Common myeloid progenitor, CD34-positive (primary cell): ENCODE measurements at regions of chr22 and their contacts with region 1.

Region 1: DNA sequence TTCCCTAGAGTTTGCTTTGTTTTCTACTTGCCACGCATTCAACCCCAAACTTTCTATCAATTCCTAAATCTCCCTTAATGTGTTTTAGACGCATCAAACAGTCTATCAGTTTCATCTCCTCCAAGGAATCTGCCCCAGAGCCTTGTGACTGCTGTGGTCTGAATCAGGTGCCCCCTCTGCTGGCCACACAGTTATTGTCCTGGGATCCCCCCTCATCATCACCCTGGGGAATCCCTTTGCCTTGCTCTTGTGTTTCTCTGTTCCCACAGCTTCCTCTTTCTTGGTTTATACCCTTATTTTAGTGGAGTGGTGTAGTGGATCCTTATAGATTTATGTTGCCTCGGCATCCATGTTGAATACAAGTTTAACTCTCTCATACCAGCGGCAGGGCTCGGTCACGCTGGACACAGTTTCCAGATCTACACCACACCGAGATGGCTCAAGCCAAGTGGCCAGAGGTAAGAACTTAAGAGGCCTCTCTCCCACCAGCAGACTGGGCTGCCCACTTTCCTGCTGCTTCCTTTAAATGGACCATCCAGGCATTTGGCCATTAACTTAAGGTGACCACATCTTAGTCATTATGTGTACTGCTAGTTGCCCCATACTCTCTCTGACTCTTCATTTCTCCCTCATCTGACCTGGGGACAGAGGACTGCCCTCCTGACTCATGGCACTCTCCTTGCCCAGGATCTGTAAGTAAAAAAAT is 8.2 kb downstream of the UPB1 start:
- DNase-seq: peak; percentile 88 to 95 (median 94)
- H3K4me3 ChIP-seq: no peak overlapping the region
- H3K27ac ChIP-seq: no peak overlapping the region
- H3K4me1 ChIP-seq: peaks cover 12 to 52% (median 44%) of the 10 kb centered on the region in 4 experiments
- H3K27me3 ChIP-seq: no peaks in the 10 kb centered on the region

Region 2: GRCh38 chr22:24486501-24486921 is 16.8 kb before region 1 on chr22:
- CTCF ChIA-PET with region 1: interaction called, 10 read pairs
- POLR2A ChIA-PET with region 1: no interaction called
- DNase-seq: peak in 2 of 3 donors; percentile 86 to 90
- H3K4me3 ChIP-seq: no peak overlapping the region
- H3K27ac ChIP-seq: no peak overlapping the region
- H3K4me1 ChIP-seq: peaks cover 0 to 11% (median 5%) of the 10 kb centered on the region in 4 experiments
- H3K27me3 ChIP-seq: no peaks in the 10 kb centered on the region

Region 3: GRCh38 chr22:24516301-24516737 is 13.0 kb after region 1 on chr22:
- CTCF ChIA-PET with region 1: interaction called, 18 read pairs
- POLR2A ChIA-PET with region 1: no interaction called
- DNase-seq: peak in 2 of 3 donors; percentile 85 to 89
- H3K4me3 ChIP-seq: no peak overlapping the region
- H3K27ac ChIP-seq: no peak overlapping the region
- H3K4me1 ChIP-seq: peaks cover 22 to 67% (median 49%) of the 10 kb centered on the region in 4 experiments
- H3K27me3 ChIP-seq: no peaks in the 10 kb centered on the region

Region 4: DNA sequence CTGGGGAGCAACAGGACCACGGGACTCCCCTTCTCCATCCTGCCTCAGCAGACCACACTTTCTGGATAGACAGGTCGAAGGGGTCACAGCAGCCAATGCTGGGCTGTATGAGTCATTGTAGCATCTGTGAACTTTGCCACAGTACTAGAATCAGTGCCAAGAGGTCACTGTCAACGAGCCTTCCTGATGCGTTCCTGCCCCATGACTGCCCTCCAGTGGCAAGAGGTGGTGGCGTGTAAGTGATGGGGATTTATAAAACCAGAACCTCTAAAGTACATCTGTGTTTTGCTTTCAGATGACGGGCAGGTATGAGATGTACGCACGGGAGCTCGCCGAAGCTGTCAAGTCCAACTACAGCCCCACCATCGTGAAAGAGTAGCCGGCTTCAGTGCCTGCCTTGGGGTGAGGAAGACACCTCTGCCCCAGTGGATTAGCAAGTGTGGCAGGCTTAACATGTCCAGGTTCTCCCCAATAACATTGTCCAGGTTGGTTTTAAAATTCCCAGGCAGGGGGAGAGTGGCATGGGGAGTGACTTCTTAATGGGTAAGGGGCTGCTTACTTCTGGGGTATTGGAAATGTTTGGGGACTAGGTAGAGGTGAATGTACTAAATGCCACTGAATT is 22.2 kb after region 1 on chr22:
- CTCF ChIA-PET with region 1: interaction called, 16 read pairs
- POLR2A ChIA-PET with region 1: no interaction called
- DNase-seq: peak; percentile 76 to 89 (median 84)
- H3K4me3 ChIP-seq: no peak overlapping the region
- H3K27ac ChIP-seq: no peak overlapping the region
- H3K4me1 ChIP-seq: peaks cover 0 to 9% (median 7%) of the 10 kb centered on the region in 4 experiments
- H3K27me3 ChIP-seq: no peaks in the 10 kb centered on the region

Region 5: GRCh38 chr22:24566899-24567511 is 63.7 kb after region 1 on chr22:
- CTCF ChIA-PET with region 1: no interaction called
- POLR2A ChIA-PET with region 1: no interaction called
- DNase-seq: no peak
- H3K4me3 ChIP-seq: no peak overlapping the region
- H3K27ac ChIP-seq: no peak overlapping the region
- H3K4me1 ChIP-seq: peaks cover 0 to 2% (median 0%) of the 10 kb centered on the region in 4 experiments
- H3K27me3 ChIP-seq: no peaks in the 10 kb centered on the region